ENCODE measurements at regions of chr17 and their contacts with region 1.

Region 1: DNA sequence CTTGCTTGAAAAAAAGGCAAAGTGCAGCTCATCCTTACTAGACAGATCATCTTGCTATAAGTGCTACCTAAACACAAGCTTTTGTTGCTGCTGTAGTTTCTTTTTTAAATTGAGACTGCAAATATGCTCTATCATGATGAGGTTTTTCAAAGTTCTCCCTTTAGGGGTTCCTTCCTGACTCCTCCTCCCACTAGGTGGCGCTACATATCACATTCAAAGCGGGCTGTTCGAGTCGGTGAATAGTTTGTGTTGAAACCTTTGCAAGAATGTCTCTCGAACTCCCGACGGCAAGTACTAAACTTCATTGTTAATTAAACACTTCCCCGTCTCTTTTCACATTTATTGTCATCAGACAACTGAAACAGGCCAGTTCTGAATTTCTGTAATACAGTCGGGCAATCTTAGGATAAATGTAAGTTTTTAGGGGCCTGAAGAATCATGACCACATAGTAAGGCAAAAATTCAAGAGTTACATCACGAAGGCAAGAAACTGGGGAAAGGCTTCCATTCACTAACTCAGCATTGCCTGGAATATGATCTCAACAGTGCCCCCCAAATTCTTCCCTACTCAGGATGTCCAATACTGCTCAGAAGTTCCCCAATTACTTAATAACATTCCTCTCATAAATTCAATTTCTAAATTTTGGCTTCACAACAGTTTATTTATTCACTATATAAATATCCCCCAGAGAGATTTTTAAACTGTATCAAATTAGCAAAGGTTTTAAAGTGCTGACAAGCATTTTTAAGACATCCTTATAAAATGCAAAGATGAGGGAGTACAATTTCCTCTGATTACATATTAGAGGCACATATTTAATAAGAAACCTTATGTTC is 6.7 kb downstream of the HS3ST3A1 start:
- DNase-seq: peak; percentile 83
- H3K4me3 ChIP-seq: no peak overlapping the region
- H3K27ac ChIP-seq: no peak overlapping the region
- H3K4me1 ChIP-seq: no peaks in the 10 kb centered on the region
- H3K27me3 ChIP-seq: peaks cover 30% of the 10 kb centered on the region
- CTCF ChIP-seq: peak; percentile 90

Region 2: GRCh38 chr17:13031718-13032350 is 563.1 kb before region 1 on chr17:
- CTCF ChIA-PET with region 1: no interaction called
- POLR2A ChIA-PET with region 1: no interaction called
- intact Hi-C with region 1: loop called (anchors 10 kb)
- DNase-seq: peak; percentile 66
- H3K4me3 ChIP-seq: no peak overlapping the region
- H3K27ac ChIP-seq: no peak overlapping the region
- H3K4me1 ChIP-seq: no peaks in the 10 kb centered on the region
- H3K27me3 ChIP-seq: no peaks in the 10 kb centered on the region
- CTCF ChIP-seq: peak; percentile 89

Region 3: GRCh38 chr17:13337864-13338371 is 257.1 kb before region 1 on chr17:
- CTCF ChIA-PET with region 1: no interaction called
- POLR2A ChIA-PET with region 1: no interaction called
- intact Hi-C with region 1: loop called (anchors 5 kb)
- DNase-seq: peak; percentile 55
- H3K4me3 ChIP-seq: no peak overlapping the region
- H3K27ac ChIP-seq: no peak overlapping the region
- H3K4me1 ChIP-seq: no peaks in the 10 kb centered on the region
- H3K27me3 ChIP-seq: peaks cover 3% of the 10 kb centered on the region
- CTCF ChIP-seq: peak; percentile 78

Region 4: DNA sequence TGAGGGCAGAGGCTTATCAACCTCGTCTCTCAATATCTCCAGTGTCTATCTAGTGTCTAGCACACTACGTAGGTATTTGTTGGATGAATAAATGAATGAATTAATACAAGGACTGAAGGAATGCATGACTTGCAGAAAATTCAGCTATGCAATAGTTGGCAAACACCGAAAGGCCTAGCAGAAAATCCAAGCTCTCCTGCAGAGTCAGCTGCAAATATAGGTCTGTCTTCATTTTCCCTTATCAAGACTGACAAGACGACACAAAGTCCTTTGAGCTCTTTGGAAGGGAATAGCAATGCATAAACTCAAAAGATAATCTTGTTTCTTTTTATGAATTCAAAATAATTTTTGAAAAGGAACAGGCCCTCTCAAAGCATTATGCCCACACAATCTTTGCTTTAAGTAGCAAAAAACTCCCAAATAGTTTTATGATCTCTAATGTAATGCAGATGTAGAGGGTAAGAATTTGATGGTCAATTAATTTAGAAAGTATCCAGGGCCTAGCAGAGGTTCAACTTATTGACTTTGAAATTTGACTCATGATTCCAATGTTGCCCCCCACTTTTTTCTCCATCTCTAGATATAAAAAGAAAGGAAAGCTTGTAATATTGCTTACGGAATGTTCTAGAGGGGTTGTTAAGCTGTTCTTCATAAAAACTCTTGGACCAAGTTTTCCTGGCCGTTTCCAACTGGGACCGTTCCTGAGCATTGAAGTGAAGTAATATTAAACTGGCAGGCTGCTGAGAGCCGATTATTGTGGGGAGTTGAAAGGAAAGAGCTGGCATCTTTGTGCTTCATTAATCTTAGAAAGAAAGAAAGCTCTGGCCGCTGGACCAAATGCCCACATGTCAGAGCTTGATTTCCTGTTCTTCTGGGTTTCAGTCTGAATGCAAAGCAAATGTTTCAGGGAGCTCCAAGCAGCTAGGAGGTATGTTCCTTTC is 220.5 kb before region 1 on chr17:
- CTCF ChIA-PET with region 1: no interaction called
- POLR2A ChIA-PET with region 1: no interaction called
- intact Hi-C with region 1: no loop called
- DNase-seq: no peak
- H3K4me3 ChIP-seq: no peak overlapping the region
- H3K27ac ChIP-seq: no peak overlapping the region
- H3K4me1 ChIP-seq: no peaks in the 10 kb centered on the region
- H3K27me3 ChIP-seq: no peaks in the 10 kb centered on the region
- CTCF ChIP-seq: no peak

Region 5: DNA sequence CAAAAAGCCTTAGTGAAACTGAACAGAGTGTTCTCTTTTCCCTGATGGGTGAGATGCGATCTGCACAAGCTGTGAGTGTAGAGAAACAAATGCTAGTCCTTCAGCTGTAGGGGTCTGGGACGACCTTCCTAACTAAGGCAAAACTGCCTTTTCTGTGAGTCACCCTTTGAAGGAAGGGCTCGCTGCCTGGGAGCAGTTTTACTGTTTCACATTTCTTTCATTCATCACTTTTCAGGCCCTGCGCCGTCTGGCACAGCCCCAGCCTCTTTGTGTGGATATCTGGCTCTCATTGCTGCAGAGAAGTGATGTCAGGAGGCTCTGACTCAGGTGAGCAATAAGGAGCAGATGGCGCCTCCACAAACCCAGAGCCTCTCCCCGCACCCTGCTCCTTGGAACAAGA is 50.7 kb before region 1 on chr17:
- CTCF ChIA-PET with region 1: no interaction called
- POLR2A ChIA-PET with region 1: no interaction called
- intact Hi-C with region 1: no loop called
- DNase-seq: no peak
- H3K4me3 ChIP-seq: no peak overlapping the region
- H3K27ac ChIP-seq: no peak overlapping the region
- H3K4me1 ChIP-seq: no peaks in the 10 kb centered on the region
- H3K27me3 ChIP-seq: no peaks in the 10 kb centered on the region
- CTCF ChIP-seq: no peak

Region 6: DNA sequence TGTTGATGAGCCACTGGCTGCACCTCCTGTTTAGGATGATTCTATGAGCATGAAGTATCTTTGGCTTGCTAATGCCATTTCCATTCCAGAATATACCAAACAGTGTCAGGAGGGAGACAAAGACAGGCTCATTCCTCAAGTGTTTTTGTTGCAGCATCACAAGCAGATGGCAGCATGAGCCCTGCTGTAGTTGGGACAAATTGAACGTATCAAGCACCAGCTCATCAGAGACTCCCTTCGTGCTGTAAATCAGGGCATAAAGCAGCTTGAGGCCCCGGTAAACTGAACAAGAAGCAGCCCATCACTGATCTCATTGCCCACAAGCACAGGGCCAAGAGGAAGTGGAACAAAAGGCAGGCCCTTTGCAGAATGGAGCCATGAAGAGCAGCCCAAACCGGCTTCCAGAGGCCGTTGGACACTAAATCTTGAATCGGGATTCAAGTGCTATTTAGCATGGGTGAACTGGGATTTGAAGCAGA is 52.6 kb after region 1 on chr17:
- CTCF ChIA-PET with region 1: no interaction called
- POLR2A ChIA-PET with region 1: no interaction called
- intact Hi-C with region 1: loop called (anchors 10 kb)
- DNase-seq: no peak
- H3K4me3 ChIP-seq: no peak overlapping the region
- H3K27ac ChIP-seq: no peak overlapping the region
- H3K4me1 ChIP-seq: no peaks in the 10 kb centered on the region
- H3K27me3 ChIP-seq: no peaks in the 10 kb centered on the region
- CTCF ChIP-seq: no peak

Region 7: DNA sequence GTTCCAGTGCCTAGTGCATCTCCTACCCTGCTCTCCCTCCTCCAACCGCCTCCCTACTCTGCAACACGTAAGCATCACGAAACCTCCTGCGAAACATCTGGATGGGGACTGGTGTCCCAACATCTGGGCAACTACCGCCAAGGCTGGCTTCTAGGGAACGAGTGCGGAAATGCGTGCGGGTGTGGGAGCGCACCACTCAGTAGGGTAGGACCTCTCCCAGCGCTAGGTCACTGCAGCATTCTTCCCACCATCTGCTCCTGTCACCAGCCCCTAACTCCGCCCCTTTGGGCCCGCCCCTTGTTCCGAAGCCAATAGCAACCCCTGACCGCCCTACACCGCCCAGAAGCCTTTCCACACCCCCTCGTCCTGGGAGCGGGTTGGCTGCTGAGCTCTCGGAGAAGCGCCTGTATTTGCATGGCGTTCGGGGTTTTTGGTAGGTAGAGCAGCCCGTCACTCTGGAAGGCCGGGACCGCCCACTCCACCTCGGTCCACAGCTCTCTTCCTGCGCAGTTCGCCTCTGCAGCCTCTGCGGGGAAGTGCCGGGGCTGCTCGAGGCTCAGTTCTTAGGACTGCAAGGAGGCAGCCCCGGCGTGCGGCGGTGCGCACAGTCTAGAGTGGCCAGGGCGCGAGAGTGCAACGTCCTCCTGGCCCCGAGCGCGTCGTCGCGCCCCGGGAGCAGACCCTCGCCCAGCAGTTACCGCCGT is 705.7 kb after region 1 on chr17 and contains the start of gene HS3ST3B1:
- CTCF ChIA-PET with region 1: interaction called, 3 read pairs
- POLR2A ChIA-PET with region 1: no interaction called
- intact Hi-C with region 1: loop called (anchors 1 kb)
- DNase-seq: peak; percentile 97
- H3K4me3 ChIP-seq: peak within 1 kb of the TSS; percentile 40
- H3K27ac ChIP-seq: no peak within 1 kb of the TSS
- H3K4me1 ChIP-seq: peaks cover 20% of the 10 kb centered on the region
- H3K27me3 ChIP-seq: peaks cover 100% of the 10 kb centered on the region
- CTCF ChIP-seq: no peak
- total RNA-seq, gene HS3ST3B1: not detected in 2 replicates

Region 8: DNA sequence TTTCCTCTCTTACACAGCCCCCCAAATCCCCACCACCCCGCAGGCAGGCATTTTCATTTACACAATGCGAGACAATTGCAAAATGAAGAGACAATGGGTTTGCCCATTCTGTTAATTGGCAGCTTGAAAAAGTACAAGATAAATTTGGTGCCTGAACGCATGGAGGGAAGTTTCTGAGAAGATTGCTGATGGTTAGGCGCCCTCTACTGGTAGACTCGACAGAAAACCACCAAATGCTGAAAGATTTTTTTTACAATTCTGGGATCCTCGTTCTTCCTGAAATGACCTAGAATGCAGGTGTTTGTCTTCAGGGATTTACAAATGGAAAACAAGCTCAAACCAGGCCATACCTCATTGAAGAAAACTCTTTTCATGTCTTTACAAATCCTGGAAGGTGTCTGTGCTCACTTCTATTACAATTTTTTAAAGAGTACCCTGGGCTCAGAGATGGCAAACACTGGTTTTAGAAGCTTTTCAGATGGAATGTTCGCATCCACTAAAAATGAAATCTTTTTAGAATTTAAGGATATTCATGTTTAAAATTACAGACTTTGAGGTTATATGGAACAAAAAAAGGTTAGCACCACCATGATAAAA is 1331.6 kb after region 1 on chr17:
- CTCF ChIA-PET with region 1: interaction called, 3 read pairs
- POLR2A ChIA-PET with region 1: no interaction called
- intact Hi-C with region 1: loop called (anchors 1 kb)
- DNase-seq: peak; percentile 58
- H3K4me3 ChIP-seq: no peak overlapping the region
- H3K27ac ChIP-seq: no peak overlapping the region
- H3K4me1 ChIP-seq: no peaks in the 10 kb centered on the region
- H3K27me3 ChIP-seq: no peaks in the 10 kb centered on the region
- CTCF ChIP-seq: peak; percentile 84

Region 9: GRCh38 chr17:15502369-15503112 is 1907.6 kb after region 1 on chr17:
- CTCF ChIA-PET with region 1: no interaction called
- POLR2A ChIA-PET with region 1: no interaction called
- intact Hi-C with region 1: loop called (anchors 10 kb)
- DNase-seq: peak; percentile 84
- H3K4me3 ChIP-seq: no peak overlapping the region
- H3K27ac ChIP-seq: no peak overlapping the region
- H3K4me1 ChIP-seq: no peaks in the 10 kb centered on the region
- H3K27me3 ChIP-seq: no peaks in the 10 kb centered on the region
- CTCF ChIP-seq: peak; percentile 93